CD4-positive, alpha-beta T cell (primary cell): ENCODE measurements at regions of chr3 and their contacts with region 1.

Region 1: DNA sequence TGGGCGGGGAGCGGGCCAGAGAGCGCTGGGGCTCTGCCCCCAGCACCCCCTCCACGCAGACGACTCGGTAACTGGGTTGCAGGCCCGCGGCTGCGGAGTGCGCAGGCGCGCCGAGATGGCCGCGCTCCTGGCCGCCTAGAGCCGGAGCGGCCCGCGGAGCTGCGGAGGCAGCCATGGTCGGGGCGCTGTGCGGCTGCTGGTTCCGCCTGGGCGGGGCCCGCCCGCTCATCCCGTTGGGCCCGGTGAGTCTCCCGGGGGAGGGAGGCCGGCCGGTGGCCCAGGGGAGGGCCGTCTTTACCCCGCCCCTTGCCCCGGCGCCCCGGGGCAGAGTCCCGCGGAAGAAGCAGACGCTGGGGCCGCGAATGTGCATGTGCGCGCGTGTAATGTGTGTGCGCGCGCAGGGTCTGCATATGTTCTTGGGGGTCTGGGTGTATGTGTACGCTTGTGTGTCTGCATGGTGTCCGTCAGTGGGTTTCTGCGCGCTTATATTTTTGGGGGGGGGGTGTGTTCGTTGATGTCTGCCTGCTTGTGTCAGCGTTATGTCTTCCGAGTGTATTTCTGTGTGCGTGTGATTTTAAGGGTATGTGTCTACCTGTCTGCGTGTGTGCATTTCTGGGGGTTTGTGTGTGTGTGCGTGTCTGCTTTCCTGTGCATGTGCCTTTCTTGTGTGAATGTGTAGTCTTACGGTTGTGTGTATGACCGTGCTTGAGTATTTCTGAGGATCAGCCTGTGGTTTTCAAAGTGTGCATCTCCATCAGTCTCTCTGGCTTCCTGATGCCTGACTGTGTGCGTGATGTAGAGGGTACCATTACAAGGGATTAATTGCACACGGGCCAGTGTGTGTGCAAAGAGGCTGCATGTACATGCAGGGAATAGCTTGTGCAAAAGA is at the start of gene ABHD14A:
- DNase-seq: peak; percentile 48 to 92 (median 67)
- ATAC-seq: peak; percentile 67
- H3K4me3 ChIP-seq: peak within 1 kb of the TSS; percentile 63
- H3K4me3 Mint-ChIP-seq: peak within 1 kb of the TSS; percentile 97
- H3K27ac ChIP-seq: peak within 1 kb of the TSS; percentile 57 to 79
- H3K27ac Mint-ChIP-seq: peak within 1 kb of the TSS; percentile 92
- H3K4me1 ChIP-seq: peaks cover 61% of the 10 kb centered on the region
- H3K4me1 Mint-ChIP-seq: peaks cover 44% of the 10 kb centered on the region
- H3K27me3 ChIP-seq: no peaks in the 10 kb centered on the region
- H3K27me3 Mint-ChIP-seq: no peaks in the 10 kb centered on the region
- CTCF ChIP-seq: no peak
- total RNA-seq, gene ABHD14A: 9.5 to 10.6 TPM

Region 2: DNA sequence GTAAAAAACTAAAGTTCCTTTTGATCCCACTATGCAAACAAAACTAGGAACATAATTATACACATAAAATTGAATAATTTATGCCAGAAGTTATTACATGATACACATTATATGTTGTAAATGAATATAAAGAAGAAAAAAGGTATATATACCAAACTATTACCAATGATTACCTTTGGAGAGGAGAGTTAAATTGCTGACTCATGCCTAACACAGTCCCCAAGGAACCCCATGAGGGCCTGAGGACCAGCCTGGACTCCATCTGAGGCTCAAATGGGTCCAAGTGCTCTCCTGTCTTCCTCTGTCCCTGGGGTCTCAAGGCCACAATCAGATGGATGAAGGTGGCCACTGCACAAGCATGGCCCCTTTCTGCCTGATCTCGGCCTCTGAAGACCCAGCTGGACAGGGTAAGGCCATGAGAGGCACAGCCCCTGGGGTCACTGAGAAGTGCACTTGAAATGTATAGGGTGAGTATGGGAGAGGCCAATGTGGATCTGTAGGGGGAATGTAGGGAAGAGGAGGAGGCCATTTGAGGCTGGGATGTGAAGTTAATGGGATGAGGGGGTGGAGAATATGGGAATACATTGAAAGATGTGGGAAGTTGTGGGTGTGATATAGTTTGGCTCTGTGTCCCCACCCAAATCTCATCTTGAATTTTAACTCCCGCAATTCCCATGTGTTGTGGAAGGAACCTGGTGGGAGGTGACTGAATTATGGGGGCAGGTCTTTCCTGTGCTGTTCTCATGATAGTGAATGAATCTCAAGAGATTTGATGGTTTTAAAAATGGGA is 71.0 kb before region 1 on chr3:
- CTCF ChIA-PET with region 1: no interaction called
- POLR2A ChIA-PET with region 1: no interaction called
- intact Hi-C with region 1: no loop called
- DNase-seq: no peak
- ATAC-seq: no peak
- H3K4me3 ChIP-seq: no peak overlapping the region
- H3K4me3 Mint-ChIP-seq: no peak overlapping the region
- H3K27ac ChIP-seq: no peak overlapping the region
- H3K27ac Mint-ChIP-seq: no peak overlapping the region
- H3K4me1 ChIP-seq: no peaks in the 10 kb centered on the region
- H3K4me1 Mint-ChIP-seq: no peaks in the 10 kb centered on the region
- H3K27me3 ChIP-seq: peaks cover 0 to 4% of the 10 kb centered on the region in 2 experiments
- H3K27me3 Mint-ChIP-seq: peaks cover 58% of the 10 kb centered on the region
- CTCF ChIP-seq: no peak

Region 3: DNA sequence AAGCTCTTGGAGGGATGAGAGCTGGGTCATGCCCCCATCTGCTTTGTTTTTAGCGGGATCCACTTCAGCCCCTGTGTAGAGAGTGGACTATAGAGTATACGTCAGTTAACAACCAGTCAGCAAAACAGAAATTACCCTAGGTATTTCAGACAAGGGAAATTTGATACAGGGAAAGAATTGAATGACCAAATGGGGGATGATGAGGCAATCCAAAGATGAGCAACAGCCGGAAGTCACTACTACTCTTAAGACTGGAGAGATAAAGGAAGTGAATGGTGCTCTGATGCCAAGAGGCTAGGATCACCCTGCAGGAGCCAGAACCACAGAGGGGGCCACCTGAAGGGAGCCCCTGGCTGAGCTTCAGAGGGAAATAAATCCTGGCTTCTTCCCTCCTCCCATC is 21.8 kb before region 1 on chr3:
- CTCF ChIA-PET with region 1: interaction called, 11 read pairs
- POLR2A ChIA-PET with region 1: interaction called, 3 read pairs
- intact Hi-C with region 1: no loop called
- DNase-seq: peak in 2 of 14 experiments; percentile 52 to 56
- ATAC-seq: no peak
- H3K4me3 ChIP-seq: no peak overlapping the region
- H3K4me3 Mint-ChIP-seq: no peak overlapping the region
- H3K27ac ChIP-seq: no peak overlapping the region
- H3K27ac Mint-ChIP-seq: no peak overlapping the region
- H3K4me1 ChIP-seq: peaks cover 20% of the 10 kb centered on the region
- H3K4me1 Mint-ChIP-seq: peaks cover 6% of the 10 kb centered on the region
- H3K27me3 ChIP-seq: peaks cover 19 to 28% of the 10 kb centered on the region in 2 experiments
- H3K27me3 Mint-ChIP-seq: peaks cover 32% of the 10 kb centered on the region
- CTCF ChIP-seq: no peak

Region 4: GRCh38 chr3:52210550-52211046 is 235.4 kb after region 1 on chr3:
- CTCF ChIA-PET with region 1: no interaction called
- POLR2A ChIA-PET with region 1: no interaction called
- intact Hi-C with region 1: no loop called
- DNase-seq: peak in 2 of 14 experiments; percentile 45 to 53
- ATAC-seq: no peak
- H3K4me3 ChIP-seq: no peak overlapping the region
- H3K4me3 Mint-ChIP-seq: no peak overlapping the region
- H3K27ac ChIP-seq: no peak overlapping the region
- H3K27ac Mint-ChIP-seq: no peak overlapping the region
- H3K4me1 ChIP-seq: peaks cover 12% of the 10 kb centered on the region
- H3K4me1 Mint-ChIP-seq: peaks cover 3% of the 10 kb centered on the region
- H3K27me3 ChIP-seq: no peaks in the 10 kb centered on the region
- H3K27me3 Mint-ChIP-seq: no peaks in the 10 kb centered on the region
- CTCF ChIP-seq: no peak

Region 5: DNA sequence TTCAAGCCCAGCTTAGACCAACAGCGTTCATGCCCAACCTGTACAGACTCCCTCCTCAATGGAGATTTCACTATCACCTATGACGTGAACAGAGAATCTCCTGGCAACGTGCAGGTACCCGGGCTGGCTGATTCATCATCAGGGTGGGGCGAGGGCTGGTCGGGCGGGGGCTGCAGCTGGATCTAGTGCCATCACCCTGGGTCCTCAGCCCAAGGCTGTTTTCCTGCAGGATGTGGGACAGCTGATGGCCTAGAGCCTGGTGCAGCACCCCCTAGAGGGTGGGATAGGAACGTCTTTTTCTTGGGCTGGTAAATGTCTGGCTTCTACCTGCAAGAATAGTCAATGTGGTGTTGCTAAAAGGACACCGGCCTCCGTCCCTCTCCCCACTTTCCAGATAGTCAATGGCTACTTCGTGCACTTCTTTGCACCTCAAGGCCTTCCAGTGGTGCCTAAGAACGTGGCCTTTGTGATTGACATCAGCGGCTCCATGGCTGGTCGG is 823.8 kb after region 1 on chr3:
- CTCF ChIA-PET with region 1: no interaction called
- POLR2A ChIA-PET with region 1: no interaction called
- intact Hi-C with region 1: no loop called
- DNase-seq: peak in 5 of 14 experiments; percentile 3 to 44 (median 23)
- ATAC-seq: peak; percentile 37
- H3K4me3 ChIP-seq: no peak overlapping the region
- H3K4me3 Mint-ChIP-seq: no peak overlapping the region
- H3K27ac ChIP-seq: no peak overlapping the region
- H3K27ac Mint-ChIP-seq: no peak overlapping the region
- H3K4me1 ChIP-seq: no peaks in the 10 kb centered on the region
- H3K4me1 Mint-ChIP-seq: no peaks in the 10 kb centered on the region
- H3K27me3 ChIP-seq: no peaks in the 10 kb centered on the region
- H3K27me3 Mint-ChIP-seq: no peaks in the 10 kb centered on the region
- CTCF ChIP-seq: peak; percentile 39